HCT116 (cell line): ENCODE measurements at regions of chr15 and their contacts with region 1.

Region 1: DNA sequence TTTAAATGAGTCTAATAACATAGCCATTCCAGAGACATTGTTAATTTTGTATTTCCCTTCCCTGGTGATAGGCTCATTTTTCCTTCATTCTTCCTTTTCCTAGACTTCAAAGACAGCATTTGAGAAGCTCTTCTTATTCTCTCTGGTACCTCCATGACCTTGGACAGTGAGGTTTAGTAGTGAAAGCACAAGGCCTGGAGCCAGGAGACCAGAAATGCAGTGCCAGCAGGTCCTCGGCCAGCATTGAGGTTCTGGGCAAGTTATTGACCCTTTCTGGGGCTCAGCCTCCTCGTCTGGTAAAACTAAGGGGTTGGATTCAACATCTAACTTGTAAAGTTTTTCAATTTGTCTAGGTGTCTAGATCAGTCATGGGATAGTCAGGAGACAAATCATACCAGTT is 146.9 kb downstream of the SV2B start:
- DNase-seq: no peak
- ATAC-seq: no peak
- H3K4me3 ChIP-seq: no peak overlapping the region
- H3K27ac ChIP-seq: no peak overlapping the region
- H3K4me1 ChIP-seq: no peaks in the 10 kb centered on the region
- H3K27me3 ChIP-seq: peaks cover 49% of the 10 kb centered on the region
- CTCF ChIP-seq: no peak
- POLR2A ChIP-seq: no peak
- RAD21 ChIP-seq: no peak

Region 2: DNA sequence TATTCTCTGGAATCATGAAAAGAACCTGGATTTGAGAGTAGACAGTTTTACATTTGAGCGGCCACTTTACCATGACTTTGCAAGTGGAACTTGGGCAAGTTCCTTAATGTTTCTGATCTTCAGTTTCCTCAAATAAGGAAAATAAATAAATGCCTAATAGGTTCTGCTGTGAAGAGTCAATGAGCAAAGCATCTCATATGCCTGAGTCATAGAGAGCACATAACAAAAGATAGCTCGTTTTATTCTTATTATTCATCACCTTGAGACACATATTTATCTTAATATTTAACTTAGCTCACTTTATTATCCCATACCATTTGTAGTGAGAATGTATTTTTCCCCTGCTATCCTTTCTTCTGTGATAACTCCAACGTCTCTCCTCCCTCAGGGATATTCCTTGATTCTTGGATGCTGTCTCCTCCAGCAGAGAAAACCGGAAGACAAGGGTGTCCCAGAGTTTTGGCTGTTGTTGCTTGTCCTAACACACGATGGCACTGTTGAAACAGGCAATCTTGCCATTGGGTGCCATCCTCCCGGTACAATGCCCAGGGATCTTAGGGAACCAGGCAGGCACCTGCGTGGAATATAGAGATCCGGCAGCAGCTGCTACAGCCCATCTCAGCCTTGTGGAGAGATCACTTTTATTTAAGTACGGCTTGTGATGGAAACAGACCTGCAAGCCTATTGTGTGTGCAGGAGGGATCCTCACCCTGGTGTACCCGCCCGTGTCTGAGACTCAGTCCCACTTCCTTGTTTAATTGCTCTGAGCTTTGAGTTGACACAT is 191.3 kb before region 1 on chr15:
- CTCF ChIA-PET with region 1: interaction called, 17 read pairs
- POLR2A ChIA-PET with region 1: no interaction called
- RAD21 ChIA-PET with region 1: no interaction called
- intact Hi-C with region 1: no loop called
- DNase-seq: peak; percentile 75
- ATAC-seq: peak; percentile 98
- H3K4me3 ChIP-seq: 0 out of 4 replicates have a peak overlapping the region, but pooled peaks of 1 of the 2 experiments have one; percentile 18
- H3K27ac ChIP-seq: no peak overlapping the region
- H3K4me1 ChIP-seq: peaks cover 0 to 6% of the 10 kb centered on the region in 2 experiments; a peak in 1 of 4 replicates
- H3K27me3 ChIP-seq: peaks cover 67% of the 10 kb centered on the region
- CTCF ChIP-seq: peak; percentile 83 to 89 (median 88)
- POLR2A ChIP-seq: no peak
- RAD21 ChIP-seq: peak; percentile 94

Region 3: GRCh38 chr15:91258425-91258779 is 11.4 kb after region 1 on chr15:
- CTCF ChIA-PET with region 1: interaction called, 29 read pairs
- POLR2A ChIA-PET with region 1: no interaction called
- RAD21 ChIA-PET with region 1: no interaction called
- intact Hi-C with region 1: no loop called
- DNase-seq: no peak
- ATAC-seq: peak; percentile 77
- H3K4me3 ChIP-seq: no peak overlapping the region
- H3K27ac ChIP-seq: no peak overlapping the region
- H3K4me1 ChIP-seq: 0 out of 4 replicates have a peak, but pooled peaks cover 0 to 4% of the 10 kb centered on the region in 2 experiments
- H3K27me3 ChIP-seq: peaks cover 5% of the 10 kb centered on the region; the same call in 1 of the 2 replicates
- CTCF ChIP-seq: peak in 2 of 3 experiments; percentile 19; a peak in 1 of 6 replicates
- POLR2A ChIP-seq: no peak
- RAD21 ChIP-seq: no peak

Region 4: DNA sequence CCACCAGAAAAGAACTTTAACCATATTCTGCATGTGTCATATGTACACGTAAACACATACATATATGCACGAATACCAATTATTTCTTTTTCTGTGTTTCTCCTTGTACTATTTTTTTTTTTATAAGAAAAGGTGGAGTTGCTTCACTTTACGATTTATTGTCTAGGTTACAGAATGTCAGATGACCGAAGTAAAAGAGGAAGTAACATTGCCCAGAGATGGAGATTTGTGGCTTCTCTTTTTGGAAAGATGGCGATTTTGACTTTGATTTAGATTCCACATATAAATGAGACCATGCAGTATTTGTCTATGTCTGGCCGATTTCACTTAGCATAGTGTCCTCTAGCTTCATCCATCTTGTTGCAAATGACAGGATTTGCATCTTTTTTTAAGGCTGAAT is 146.2 kb after region 1 on chr15:
- CTCF ChIA-PET with region 1: no interaction called
- POLR2A ChIA-PET with region 1: no interaction called
- RAD21 ChIA-PET with region 1: no interaction called
- intact Hi-C with region 1: no loop called
- DNase-seq: no peak
- ATAC-seq: no peak
- H3K4me3 ChIP-seq: no peak overlapping the region
- H3K27ac ChIP-seq: no peak overlapping the region
- H3K4me1 ChIP-seq: no peaks in the 10 kb centered on the region
- H3K27me3 ChIP-seq: peaks cover 8% of the 10 kb centered on the region
- CTCF ChIP-seq: no peak
- POLR2A ChIP-seq: no peak
- RAD21 ChIP-seq: no peak

Region 5: GRCh38 chr15:91689377-91689776 is 442.4 kb after region 1 on chr15:
- CTCF ChIA-PET with region 1: no interaction called
- POLR2A ChIA-PET with region 1: no interaction called
- RAD21 ChIA-PET with region 1: no interaction called
- intact Hi-C with region 1: no loop called
- DNase-seq: no peak
- ATAC-seq: no peak
- H3K4me3 ChIP-seq: no peak overlapping the region
- H3K27ac ChIP-seq: no peak overlapping the region
- H3K4me1 ChIP-seq: no peaks in the 10 kb centered on the region
- H3K27me3 ChIP-seq: 0 out of 2 replicates have a peak, but pooled peaks cover 2% of the 10 kb centered on the region
- CTCF ChIP-seq: no peak
- POLR2A ChIP-seq: no peak
- RAD21 ChIP-seq: no peak